Head of caudate nucleus (tissue), 42 donors: ENCODE measurements at regions of chr12 and their contacts with region 1.

Region 1: GRCh38 chr12:1939801-1940607 is 21.6 kb upstream of the CACNA2D4 start:
- DNase-seq: peak; percentile 59 to 97 (median 92)

Region 2: GRCh38 chr12:1517007-1517406 is 423.0 kb before region 1 on chr12:
- intact Hi-C with region 1: no loop called
- DNase-seq: peak in 4 of 42 donors; percentile 24 to 30 (median 25)

Region 3: DNA sequence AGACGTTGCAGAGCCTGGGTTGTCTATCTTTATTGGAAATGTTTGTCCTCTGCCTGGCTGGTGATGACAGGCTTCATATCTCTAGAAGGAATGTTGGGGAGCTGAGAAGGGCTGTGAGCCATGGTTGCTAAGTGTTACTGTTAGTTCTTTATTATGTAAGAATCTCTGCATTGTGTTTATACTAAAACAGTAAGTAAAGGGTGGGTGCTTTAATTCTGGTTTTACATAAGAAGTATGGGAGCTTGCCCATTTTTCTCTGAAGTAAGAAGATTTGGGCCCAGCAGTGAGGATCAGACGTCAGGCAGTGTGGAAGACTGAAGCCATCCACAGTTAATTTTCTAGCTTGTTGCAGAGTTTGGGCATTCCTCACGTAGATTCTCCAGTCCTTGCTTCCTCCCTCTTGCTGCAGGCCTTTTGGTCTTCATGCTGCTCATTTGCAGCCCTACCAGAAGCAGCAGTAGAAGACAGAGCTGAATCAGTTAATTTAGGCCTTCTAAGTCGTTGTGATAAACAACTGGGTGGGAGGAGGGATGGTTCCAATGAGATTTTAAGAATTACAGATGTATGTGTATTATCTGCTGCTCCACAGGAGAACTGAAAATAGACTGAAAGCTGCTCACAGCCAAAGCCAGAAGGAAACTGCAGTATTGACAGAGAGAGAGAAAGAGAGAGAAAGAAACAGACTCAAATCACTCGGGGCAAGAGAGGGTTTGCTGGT is 289.6 kb before region 1 on chr12:
- intact Hi-C with region 1: loop called (anchors 5 kb)
- DNase-seq: no peak

Region 4: DNA sequence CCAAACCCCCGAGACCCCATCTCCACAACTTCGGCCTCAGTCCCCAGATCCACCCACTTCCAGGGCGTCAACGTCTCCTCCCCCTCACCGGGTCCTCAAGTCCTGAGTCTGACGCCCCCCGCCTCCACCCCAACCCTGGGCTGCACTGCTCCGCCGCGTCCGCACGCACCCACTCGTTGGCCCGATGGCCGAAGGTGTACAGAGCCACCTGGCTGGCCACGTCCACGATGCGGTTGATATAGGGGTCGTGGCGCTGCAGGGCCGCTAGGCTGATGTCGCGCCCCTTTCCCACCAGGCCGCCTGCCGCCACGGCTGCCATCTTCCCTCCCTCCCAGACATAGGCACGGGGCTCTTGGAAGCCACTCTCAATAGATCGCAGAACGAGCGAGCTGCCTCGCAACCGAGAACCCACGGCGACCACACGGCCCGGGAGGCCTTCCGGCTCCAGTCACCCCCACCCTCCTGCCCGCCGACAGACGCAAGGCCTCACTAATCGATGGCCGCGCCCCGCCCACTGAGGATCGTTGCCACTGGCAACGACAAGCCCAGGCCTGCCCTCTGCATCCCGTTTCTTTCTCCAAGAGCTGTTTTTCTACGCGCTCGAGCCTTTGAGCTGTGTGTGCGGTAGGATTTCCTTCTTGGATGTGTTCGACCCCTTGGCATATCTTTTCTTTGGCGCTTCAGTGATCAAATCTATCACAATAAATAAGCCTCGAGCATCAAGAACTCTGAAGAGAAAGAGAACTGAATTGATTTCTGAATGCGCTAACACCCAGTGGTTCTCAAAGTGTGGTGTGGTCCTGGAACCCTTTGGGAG is 64.3 kb after region 1 on chr12 and contains the start of gene DCP1B:
- intact Hi-C with region 1: loop called (anchors 5 kb)
- DNase-seq: peak; percentile 94 to 99 (median 98)

Region 5: GRCh38 chr12:2034633-2035430 is 94.8 kb after region 1 on chr12:
- intact Hi-C with region 1: loop called (anchors 10 kb)
- DNase-seq: peak; percentile 69 to 97 (median 92)